ENCODE measurements at regions of chr18 and their contacts with region 1.

Region 1: DNA sequence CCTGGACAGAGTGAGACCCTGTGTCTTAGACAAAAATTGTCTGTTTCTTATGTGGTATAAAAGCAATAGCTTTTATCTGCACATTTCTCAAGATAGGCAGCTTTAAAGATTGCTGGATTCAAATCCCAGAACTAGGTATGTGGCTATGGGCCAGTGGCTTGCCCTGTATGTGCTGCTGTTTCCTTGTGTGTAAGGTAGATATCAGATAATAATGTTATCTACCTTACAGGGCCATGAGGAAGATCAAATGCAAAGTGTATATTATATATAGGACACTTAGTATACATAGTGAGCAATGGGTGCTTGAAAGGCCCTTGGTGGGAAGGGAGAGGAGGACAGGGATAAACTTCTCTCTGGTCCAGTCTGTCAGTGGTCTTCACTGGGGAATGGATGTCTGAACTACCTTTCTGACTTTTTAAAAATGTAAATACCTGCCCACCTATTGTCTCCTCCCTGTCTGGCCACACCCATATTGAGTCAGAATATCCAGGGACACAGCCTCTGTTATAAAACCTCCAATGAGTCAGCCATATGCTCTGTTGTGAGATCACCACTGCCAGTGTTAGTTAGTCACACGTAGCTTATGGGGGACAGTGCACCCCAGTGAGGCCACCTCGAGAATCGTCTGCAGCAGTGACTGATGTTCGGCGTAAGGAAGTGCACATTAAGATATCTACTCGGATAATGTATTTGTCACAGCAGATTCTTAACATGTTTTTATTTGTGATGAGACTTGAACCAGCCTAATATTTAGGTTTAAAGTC is 383.4 kb downstream of the PTPRM start:
- DNase-seq: peak; percentile 40
- H3K4me3 Mint-ChIP-seq: no peak overlapping the region
- H3K27ac Mint-ChIP-seq: peak overlapping the region; percentile 42
- H3K4me1 Mint-ChIP-seq: peaks cover 24% of the 10 kb centered on the region
- H3K27me3 Mint-ChIP-seq: no peaks in the 10 kb centered on the region

Region 2: GRCh38 chr18:7885865-7886264 is 64.7 kb before region 1 on chr18:
- CTCF ChIA-PET with region 1: no interaction called
- POLR2A ChIA-PET with region 1: no interaction called
- intact Hi-C with region 1: loop called (anchors 5 kb)
- DNase-seq: no peak
- H3K4me3 Mint-ChIP-seq: no peak overlapping the region
- H3K27ac Mint-ChIP-seq: no peak overlapping the region
- H3K4me1 Mint-ChIP-seq: no peaks in the 10 kb centered on the region
- H3K27me3 Mint-ChIP-seq: no peaks in the 10 kb centered on the region

Region 3: DNA sequence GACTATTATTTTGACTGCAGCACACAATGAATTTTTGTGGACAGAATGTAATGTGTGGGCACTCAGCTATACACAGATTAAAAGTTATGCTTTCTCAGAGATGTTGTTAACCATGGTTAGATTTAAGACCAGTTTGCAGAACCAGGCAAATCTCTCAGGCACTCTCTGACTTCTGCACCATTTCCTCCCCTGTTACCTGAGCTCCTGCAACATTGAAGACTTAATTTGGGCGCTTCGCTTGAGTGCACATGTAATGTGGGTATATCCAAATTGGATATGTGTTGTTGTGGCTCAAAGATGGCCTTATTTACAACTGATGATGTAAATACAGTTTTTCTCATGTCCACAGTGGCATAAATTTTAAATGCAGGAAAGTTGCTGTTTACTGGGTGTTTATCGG is 86.0 kb after region 1 on chr18:
- CTCF ChIA-PET with region 1: no interaction called
- POLR2A ChIA-PET with region 1: no interaction called
- intact Hi-C with region 1: loop called (anchors 1 kb)
- DNase-seq: no peak
- H3K4me3 Mint-ChIP-seq: no peak overlapping the region
- H3K27ac Mint-ChIP-seq: no peak overlapping the region
- H3K4me1 Mint-ChIP-seq: peaks cover 5% of the 10 kb centered on the region
- H3K27me3 Mint-ChIP-seq: no peaks in the 10 kb centered on the region

Region 4: GRCh38 chr18:8045884-8046281 is 95.3 kb after region 1 on chr18:
- CTCF ChIA-PET with region 1: no interaction called
- POLR2A ChIA-PET with region 1: no interaction called
- intact Hi-C with region 1: loop called (anchors 1 kb)
- DNase-seq: peak; percentile 70
- H3K4me3 Mint-ChIP-seq: no peak overlapping the region
- H3K27ac Mint-ChIP-seq: no peak overlapping the region
- H3K4me1 Mint-ChIP-seq: peaks cover 18% of the 10 kb centered on the region
- H3K27me3 Mint-ChIP-seq: no peaks in the 10 kb centered on the region

Region 5: GRCh38 chr18:9117980-9118841 is 1167.6 kb after region 1 on chr18:
- CTCF ChIA-PET with region 1: no interaction called
- POLR2A ChIA-PET with region 1: no interaction called
- intact Hi-C with region 1: loop called (anchors 10 kb)
- DNase-seq: no peak
- H3K4me3 Mint-ChIP-seq: peak overlapping the region; percentile 72
- H3K27ac Mint-ChIP-seq: peak overlapping the region; percentile 97
- H3K4me1 Mint-ChIP-seq: peaks cover 81% of the 10 kb centered on the region
- H3K27me3 Mint-ChIP-seq: no peaks in the 10 kb centered on the region

Measured in activated CD4-positive, alpha-beta memory T cell treated with anti-CD3 and anti-CD28 coated beads for 36 hours (primary cell).